Sigmoid colon (tissue), 7 donors: ENCODE measurements at regions of chr14 and their contacts with region 1.

Region 1: DNA sequence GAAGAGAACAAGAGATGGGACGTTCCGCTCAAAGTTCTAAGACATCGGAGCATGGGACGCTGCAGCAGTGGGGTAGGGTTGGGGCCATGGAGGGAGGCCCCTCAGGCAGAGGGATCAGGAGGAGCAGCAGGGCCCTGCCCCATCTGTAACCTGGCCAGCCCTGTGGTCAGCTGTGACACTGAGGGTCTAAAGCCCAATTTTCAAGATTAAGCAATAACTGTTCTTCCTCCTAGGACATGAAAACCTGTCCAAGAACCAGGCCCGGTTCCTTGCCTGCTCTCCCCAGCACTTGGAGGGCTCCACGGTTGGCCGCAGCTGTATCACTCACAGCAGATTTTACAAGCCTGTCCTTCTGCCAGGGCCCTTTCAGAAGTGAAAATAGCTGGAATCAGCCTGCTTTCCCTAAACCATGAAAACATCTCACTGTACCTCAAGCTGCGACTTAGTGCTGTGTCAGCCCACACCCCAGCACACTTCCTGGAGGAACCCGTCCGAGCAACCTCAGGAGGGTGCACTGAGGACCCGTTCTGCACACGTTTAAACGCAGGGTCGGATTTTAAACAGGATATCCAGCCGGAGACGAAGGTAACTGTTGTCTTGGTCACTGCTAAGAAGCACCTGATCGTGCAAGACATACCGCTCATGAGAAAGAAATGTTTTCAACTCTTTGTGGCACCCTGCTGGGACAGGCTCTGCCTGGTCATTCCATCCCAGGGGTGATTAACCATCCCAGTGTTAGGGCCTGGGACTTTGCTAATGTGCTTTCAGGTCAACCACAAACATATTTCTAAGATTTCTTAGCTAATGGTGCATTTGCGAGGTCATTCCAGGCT is 201.9 kb upstream of the DIO3 start:
- DNase-seq: peak; percentile 95
- H3K4me3 ChIP-seq: peak overlapping the region in 2 of 4 donors; percentile 12 to 13
- H3K27ac ChIP-seq: peak overlapping the region; percentile 74 to 93 (median 90)
- H3K4me1 ChIP-seq: peaks cover 6 to 71% (median 64%) of the 10 kb centered on the region in 4 donors
- H3K27me3 ChIP-seq: no peaks in the 10 kb centered on the region
- CTCF ChIP-seq: no peak
- EP300 ChIP-seq: no peak
- POLR2A ChIP-seq: no peak

Region 2: GRCh38 chr14:100709289-100710284 is 649.9 kb before region 1 on chr14:
- intact Hi-C with region 1: loop called (anchors 10 kb)
- DNase-seq: no peak
- H3K4me3 ChIP-seq: peak overlapping the region in 3 of 4 donors; percentile 0 to 41 (median 32)
- H3K27ac ChIP-seq: peak overlapping the region in 3 of 4 donors; percentile 15 to 80 (median 78)
- H3K4me1 ChIP-seq: peaks cover 0 to 20% (median 19%) of the 10 kb centered on the region in 4 donors
- H3K27me3 ChIP-seq: no peaks in the 10 kb centered on the region
- CTCF ChIP-seq: peak in 2 of 4 experiments; percentile 55 to 59
- EP300 ChIP-seq: no peak
- POLR2A ChIP-seq: no peak

Region 3: DNA sequence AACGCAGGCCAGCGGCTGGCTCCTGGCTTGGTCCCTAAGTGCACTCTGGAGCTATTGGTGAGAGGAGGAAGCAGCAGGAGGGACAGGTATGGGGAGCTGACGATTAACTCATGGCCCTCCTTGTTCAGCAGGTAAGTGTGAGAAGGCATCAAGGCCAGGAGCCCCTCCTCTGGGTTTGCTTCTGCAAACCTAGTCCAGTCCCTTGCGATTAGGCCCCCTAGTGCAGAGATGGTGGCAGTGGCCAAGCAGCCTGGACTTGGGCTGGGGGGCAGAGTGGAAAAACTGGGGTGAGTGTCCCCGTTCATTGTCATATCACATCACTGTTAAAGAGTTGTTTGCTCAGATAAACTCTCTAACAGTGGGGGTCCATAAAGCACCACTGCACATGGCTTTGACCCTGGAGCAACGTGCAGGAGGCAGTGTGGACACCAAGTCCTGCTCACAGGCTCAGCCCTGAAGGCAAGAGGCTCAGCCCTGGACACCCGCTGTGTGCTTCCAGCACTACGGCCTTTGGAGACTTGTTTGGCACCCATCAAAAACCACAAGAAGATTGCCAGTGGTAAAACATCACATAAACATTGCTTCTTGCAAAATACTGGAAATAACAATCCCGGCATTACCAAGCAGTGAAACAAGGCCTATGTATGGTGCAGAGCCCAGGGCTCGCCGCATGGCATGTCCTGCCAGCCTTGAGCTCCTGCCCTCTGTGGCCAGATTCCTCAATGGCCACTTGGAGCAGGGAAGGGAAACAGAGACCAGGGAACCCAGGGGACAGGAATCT is 271.6 kb before region 1 on chr14:
- intact Hi-C with region 1: no loop called
- DNase-seq: no peak
- H3K4me3 ChIP-seq: no peak overlapping the region
- H3K27ac ChIP-seq: no peak overlapping the region
- H3K4me1 ChIP-seq: no peaks in the 10 kb centered on the region
- H3K27me3 ChIP-seq: no peaks in the 10 kb centered on the region
- CTCF ChIP-seq: no peak
- EP300 ChIP-seq: no peak
- POLR2A ChIP-seq: no peak

Region 4: DNA sequence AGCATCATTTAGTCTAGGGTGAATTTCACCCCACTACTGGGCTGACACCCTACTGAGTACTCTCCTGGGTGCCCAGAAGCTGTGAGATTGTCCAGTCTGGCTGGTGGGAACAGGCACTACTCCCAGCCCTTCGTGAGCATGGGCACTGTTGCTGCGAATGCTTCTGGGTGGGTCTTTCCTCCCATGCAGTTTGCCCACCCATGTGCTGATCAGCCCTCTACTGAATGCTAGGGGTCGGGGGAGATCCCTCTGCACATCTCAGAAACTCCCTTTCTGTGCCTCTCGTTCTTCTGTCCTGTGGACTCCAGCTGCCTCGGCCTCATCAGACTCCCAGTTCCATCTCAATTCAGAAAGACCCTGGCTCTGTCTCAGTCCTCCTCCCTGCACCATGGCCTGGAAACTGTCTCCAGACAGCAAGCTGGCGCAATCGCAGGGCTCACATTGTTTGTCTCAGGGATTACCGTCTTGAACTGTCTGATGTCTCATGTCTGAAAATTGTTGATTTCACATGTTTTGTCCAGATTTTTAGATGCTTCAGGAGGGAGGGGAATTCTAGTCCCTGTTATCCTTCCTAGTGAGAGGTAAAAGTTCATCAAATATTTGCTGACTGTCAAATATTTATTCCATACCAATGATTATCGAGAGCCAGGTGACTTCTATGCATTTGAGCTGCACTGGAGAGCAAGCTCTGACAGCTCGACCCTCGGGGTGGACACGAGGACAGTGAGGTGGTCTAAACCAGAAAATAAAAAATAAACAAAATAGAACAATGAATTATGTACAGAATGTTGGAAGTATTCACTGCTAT is 139.3 kb before region 1 on chr14:
- intact Hi-C with region 1: loop called (anchors 2 kb)
- DNase-seq: peak; percentile 74
- H3K4me3 ChIP-seq: no peak overlapping the region
- H3K27ac ChIP-seq: peak overlapping the region in 3 of 4 donors; percentile 55 to 66 (median 56)
- H3K4me1 ChIP-seq: peaks cover 0 to 42% (median 31%) of the 10 kb centered on the region in 4 donors
- H3K27me3 ChIP-seq: no peaks in the 10 kb centered on the region
- CTCF ChIP-seq: no peak
- EP300 ChIP-seq: peak in 1 of 4 donors; percentile 34
- POLR2A ChIP-seq: no peak

Region 5: GRCh38 chr14:101774006-101774795 is 414.8 kb after region 1 on chr14:
- intact Hi-C with region 1: no loop called
- DNase-seq: no peak
- H3K4me3 ChIP-seq: no peak overlapping the region
- H3K27ac ChIP-seq: no peak overlapping the region
- H3K4me1 ChIP-seq: peaks cover 0 to 20% (median 7%) of the 10 kb centered on the region in 4 donors
- H3K27me3 ChIP-seq: no peaks in the 10 kb centered on the region
- CTCF ChIP-seq: no peak
- EP300 ChIP-seq: no peak
- POLR2A ChIP-seq: no peak